Activated CD4-positive, alpha-beta T cell treated with anti-CD3 and anti-CD28 coated beads for 36 hours (primary cell): ENCODE measurements at regions of chr13 and their contacts with region 1.

Region 1: GRCh38 chr13:77724092-77724491 is 26.6 kb downstream of the SLAIN1 start:
- DNase-seq: peak; percentile 18
- ATAC-seq: peak; percentile 68
- H3K4me3 Mint-ChIP-seq: no peak overlapping the region
- H3K27ac Mint-ChIP-seq: no peak overlapping the region
- H3K4me1 Mint-ChIP-seq: peaks cover 37% of the 10 kb centered on the region
- H3K27me3 Mint-ChIP-seq: no peaks in the 10 kb centered on the region

Region 2: GRCh38 chr13:77274126-77274525 is 450.0 kb before region 1 on chr13:
- CTCF ChIA-PET with region 1: no interaction called
- POLR2A ChIA-PET with region 1: no interaction called
- intact Hi-C with region 1: no loop called
- DNase-seq: no peak
- ATAC-seq: no peak
- H3K4me3 Mint-ChIP-seq: no peak overlapping the region
- H3K27ac Mint-ChIP-seq: no peak overlapping the region
- H3K4me1 Mint-ChIP-seq: peaks cover 16% of the 10 kb centered on the region
- H3K27me3 Mint-ChIP-seq: no peaks in the 10 kb centered on the region

Region 3: GRCh38 chr13:77637588-77637987 is 86.5 kb before region 1 on chr13:
- CTCF ChIA-PET with region 1: no interaction called
- POLR2A ChIA-PET with region 1: no interaction called
- intact Hi-C with region 1: no loop called
- DNase-seq: peak; percentile 8
- ATAC-seq: no peak
- H3K4me3 Mint-ChIP-seq: no peak overlapping the region
- H3K27ac Mint-ChIP-seq: no peak overlapping the region
- H3K4me1 Mint-ChIP-seq: no peaks in the 10 kb centered on the region
- H3K27me3 Mint-ChIP-seq: no peaks in the 10 kb centered on the region

Region 4: GRCh38 chr13:77745784-77746183 is 21.7 kb after region 1 on chr13:
- CTCF ChIA-PET with region 1: interaction called, 3 read pairs
- POLR2A ChIA-PET with region 1: no interaction called
- intact Hi-C with region 1: loop called in 1 of 2 experiments (anchors 2 kb)
- DNase-seq: no peak
- ATAC-seq: no peak
- H3K4me3 Mint-ChIP-seq: no peak overlapping the region
- H3K27ac Mint-ChIP-seq: no peak overlapping the region
- H3K4me1 Mint-ChIP-seq: peaks cover 16% of the 10 kb centered on the region
- H3K27me3 Mint-ChIP-seq: no peaks in the 10 kb centered on the region

Region 5: GRCh38 chr13:77846173-77846572 is 122.1 kb after region 1 on chr13:
- CTCF ChIA-PET with region 1: no interaction called
- POLR2A ChIA-PET with region 1: no interaction called
- intact Hi-C with region 1: no loop called
- DNase-seq: no peak
- ATAC-seq: no peak
- H3K4me3 Mint-ChIP-seq: no peak overlapping the region
- H3K27ac Mint-ChIP-seq: no peak overlapping the region
- H3K4me1 Mint-ChIP-seq: no peaks in the 10 kb centered on the region
- H3K27me3 Mint-ChIP-seq: no peaks in the 10 kb centered on the region